Activated CD8-positive, alpha-beta memory T cell treated with anti-CD3 and anti-CD28 coated beads, Interleukin-2, amount 10 ng/mL, durations not matched to agents 7 days and 5 days (primary cell): ENCODE measurements at regions of chr17 and their contacts with region 1.

Region 1: DNA sequence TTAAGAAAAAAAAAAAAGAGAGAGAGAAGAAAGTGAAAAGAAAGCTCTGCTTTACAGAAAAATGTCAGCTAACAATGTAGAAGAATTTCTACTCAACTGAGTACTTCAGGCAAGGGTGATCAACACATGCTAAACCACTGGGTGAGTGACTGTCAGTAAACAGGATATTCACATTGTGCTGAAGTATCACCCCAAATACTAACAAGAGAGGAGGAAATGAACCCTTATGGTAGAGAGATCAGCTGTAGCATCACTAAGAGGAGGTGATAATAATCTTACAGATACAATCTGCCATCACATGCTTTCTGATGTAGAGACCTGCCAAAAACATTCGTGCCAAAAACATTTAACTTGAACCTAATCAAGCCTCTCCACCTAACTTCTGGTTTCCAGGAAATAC is 30.7 kb upstream of the ICAM2 start:
- DNase-seq: peak; percentile 58
- ATAC-seq: peak; percentile 99
- H3K4me3 Mint-ChIP-seq: no peak overlapping the region
- H3K27ac Mint-ChIP-seq: peak overlapping the region; percentile 82
- H3K4me1 Mint-ChIP-seq: peaks cover 27% of the 10 kb centered on the region
- H3K27me3 Mint-ChIP-seq: no peaks in the 10 kb centered on the region

Region 2: GRCh38 chr17:63931099-63931561 is 120.0 kb before region 1 on chr17:
- CTCF ChIA-PET with region 1: no interaction called
- DNase-seq: peak; percentile 82
- ATAC-seq: peak; percentile 88
- H3K4me3 Mint-ChIP-seq: peak overlapping the region; percentile 81
- H3K27ac Mint-ChIP-seq: peak overlapping the region; percentile 86
- H3K4me1 Mint-ChIP-seq: peaks cover 20% of the 10 kb centered on the region
- H3K27me3 Mint-ChIP-seq: peaks cover 7% of the 10 kb centered on the region

Region 3: DNA sequence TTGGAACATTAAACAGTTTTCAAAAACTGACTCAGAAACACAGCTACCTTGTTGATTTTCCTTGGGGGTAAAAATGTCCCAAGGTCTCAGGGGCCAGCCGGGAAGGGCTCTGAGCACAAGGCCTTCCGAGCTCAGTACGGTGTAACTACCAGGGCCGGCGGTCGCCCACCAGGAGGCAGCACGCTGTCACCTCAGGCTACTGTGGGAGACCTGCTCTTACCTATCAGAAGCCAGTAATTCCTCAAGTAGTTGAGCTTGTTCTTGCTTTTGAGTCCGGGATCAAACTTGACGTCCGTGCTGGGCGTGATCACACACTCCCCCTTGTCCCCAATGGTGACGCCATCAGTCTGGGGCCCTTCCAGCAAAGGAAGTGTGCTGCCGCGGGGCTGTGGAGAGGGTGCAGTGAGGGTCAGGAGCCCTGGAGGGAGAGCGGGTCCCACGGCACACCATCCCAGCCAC is 12.6 kb after region 1 on chr17:
- CTCF ChIA-PET with region 1: interaction called, 10 read pairs
- DNase-seq: peak; percentile 54
- ATAC-seq: peak; percentile 54
- H3K4me3 Mint-ChIP-seq: no peak overlapping the region
- H3K27ac Mint-ChIP-seq: no peak overlapping the region
- H3K4me1 Mint-ChIP-seq: peaks cover 28% of the 10 kb centered on the region
- H3K27me3 Mint-ChIP-seq: no peaks in the 10 kb centered on the region